IMR-90 (cell line): ENCODE measurements at regions of chr5 and their contacts with region 1.

Region 1: DNA sequence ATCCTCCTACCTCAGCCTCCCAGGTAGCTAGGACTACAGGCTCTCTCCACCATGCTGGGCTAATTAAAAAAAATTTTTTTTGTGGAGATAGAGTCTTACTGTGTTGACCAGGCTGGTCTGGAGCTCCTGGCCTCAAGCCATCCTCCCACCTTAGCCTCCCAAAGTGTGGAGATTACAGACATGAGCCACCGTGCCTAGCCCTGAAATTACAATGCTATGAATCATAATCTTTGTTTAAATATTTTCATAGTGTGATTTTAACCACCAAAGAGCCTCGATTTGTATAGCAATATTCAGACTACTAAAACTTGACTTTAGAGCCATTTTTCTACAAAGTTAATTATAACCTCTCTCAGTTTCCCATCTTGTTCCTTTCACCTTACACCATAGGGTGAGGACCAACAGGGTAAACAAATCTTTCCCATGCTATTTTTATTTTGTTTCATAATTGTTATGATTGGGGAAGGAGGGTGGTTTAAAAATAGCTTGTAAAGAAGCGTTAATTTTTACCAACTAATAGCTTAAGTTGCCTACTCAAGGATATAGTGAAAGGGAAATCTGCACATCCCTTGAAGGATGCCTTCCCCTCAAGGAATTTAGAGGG is 32.7 kb downstream of the UBE2D2 start:
- DNase-seq: peak; percentile 69
- ATAC-seq: peak; percentile 68
- H3K4me3 ChIP-seq: no peak overlapping the region
- H3K27ac ChIP-seq: peak overlapping the region; percentile 49; the same call in 1 of the 2 replicates
- H3K4me1 ChIP-seq: peaks cover 2% of the 10 kb centered on the region; the same call in 1 of the 2 replicates
- H3K27me3 ChIP-seq: no peaks in the 10 kb centered on the region
- CTCF ChIP-seq: no peak
- POLR2A ChIP-seq: no peak
- RAD21 ChIP-seq: no peak

Region 2: DNA sequence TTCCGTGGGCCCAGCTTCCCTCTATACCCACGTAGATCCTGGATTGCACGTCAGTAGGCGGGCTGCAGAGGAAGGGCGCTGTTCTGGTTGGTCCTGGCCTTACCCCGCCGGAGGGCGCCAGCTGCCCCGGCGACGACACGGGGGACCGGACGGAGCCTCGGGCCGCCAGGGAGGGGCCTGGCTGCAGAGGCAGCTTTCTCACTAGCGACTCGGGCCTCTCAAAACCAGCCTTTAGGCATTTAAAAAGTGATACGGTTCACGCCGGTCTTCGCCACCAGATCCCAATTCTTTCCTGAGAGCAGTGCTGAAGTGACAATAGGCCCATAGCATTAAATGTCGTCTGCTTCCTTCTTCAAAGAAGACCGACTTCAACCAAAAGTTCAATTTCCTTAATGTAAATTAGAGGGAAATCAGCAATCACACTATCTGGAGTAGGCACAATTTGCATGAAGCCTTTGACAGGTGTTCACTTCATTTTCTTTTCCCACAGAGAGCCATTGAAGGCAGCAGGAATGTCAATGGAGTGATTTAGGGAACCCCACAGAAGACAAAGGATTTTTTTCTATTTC is 50.3 kb before region 1 on chr5:
- CTCF ChIA-PET with region 1: no interaction called
- POLR2A ChIA-PET with region 1: interaction called, 12 read pairs
- dilution Hi-C with region 1: no loop called
- in situ Hi-C with region 1: no loop called
- intact Hi-C with region 1: no loop called
- DNase-seq: peak; percentile 5
- ATAC-seq: peak; percentile 78
- H3K4me3 ChIP-seq: no peak overlapping the region
- H3K27ac ChIP-seq: no peak overlapping the region
- H3K4me1 ChIP-seq: no peaks in the 10 kb centered on the region
- H3K27me3 ChIP-seq: no peaks in the 10 kb centered on the region
- CTCF ChIP-seq: no peak
- POLR2A ChIP-seq: no peak
- RAD21 ChIP-seq: no peak

Region 3: GRCh38 chr5:139574641-139575312 is 19.0 kb before region 1 on chr5:
- CTCF ChIA-PET with region 1: interaction called, 10 read pairs
- POLR2A ChIA-PET with region 1: interaction called, 8 read pairs
- dilution Hi-C with region 1: no loop called
- in situ Hi-C with region 1: no loop called
- intact Hi-C with region 1: no loop called
- DNase-seq: peak; percentile 62
- ATAC-seq: peak; percentile 77
- H3K4me3 ChIP-seq: no peak overlapping the region
- H3K27ac ChIP-seq: no peak overlapping the region
- H3K4me1 ChIP-seq: peaks cover 11% of the 10 kb centered on the region
- H3K27me3 ChIP-seq: no peaks in the 10 kb centered on the region
- CTCF ChIP-seq: peak; percentile 63
- POLR2A ChIP-seq: no peak
- RAD21 ChIP-seq: peak; percentile 58